PC-3 (cell line): ENCODE measurements at regions of chr2 and their contacts with region 1.

Region 1: GRCh38 chr2:173571021-173571882 is 216.6 kb downstream of the CDCA7 start:
- DNase-seq: peak; percentile 77
- ATAC-seq: peak; percentile 72
- H3K4me3 ChIP-seq: peak overlapping the region; percentile 58
- H3K27ac ChIP-seq: peak overlapping the region; percentile 71
- H3K4me1 ChIP-seq: peaks cover 40% of the 10 kb centered on the region
- H3K27me3 ChIP-seq: no peaks in the 10 kb centered on the region
- CTCF ChIP-seq: peak; percentile 70

Region 2: DNA sequence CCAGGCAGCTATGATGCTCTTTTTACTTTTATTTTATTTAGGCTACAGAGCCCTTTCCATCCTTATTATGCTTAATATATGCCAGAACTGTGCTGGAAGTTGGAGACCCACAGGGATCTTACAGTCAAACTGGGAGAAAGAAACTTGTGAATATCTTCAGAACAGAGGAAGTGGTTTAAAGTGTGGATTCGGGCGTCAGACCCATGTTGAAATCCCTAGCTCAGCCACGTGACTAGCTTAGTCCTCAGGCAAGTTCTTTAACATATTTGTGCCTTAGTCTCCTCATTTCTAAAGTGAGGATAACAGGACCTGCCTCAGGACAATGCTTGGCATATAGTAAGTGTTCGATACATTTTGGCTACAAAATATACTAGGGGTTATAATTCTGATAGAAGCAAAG is 436.5 kb before region 1 on chr2:
- CTCF ChIA-PET with region 1: no interaction called
- POLR2A ChIA-PET with region 1: no interaction called
- intact Hi-C with region 1: no loop called
- DNase-seq: no peak
- ATAC-seq: no peak
- H3K4me3 ChIP-seq: no peak overlapping the region
- H3K27ac ChIP-seq: no peak overlapping the region
- H3K4me1 ChIP-seq: no peaks in the 10 kb centered on the region
- H3K27me3 ChIP-seq: no peaks in the 10 kb centered on the region
- CTCF ChIP-seq: no peak

Region 3: GRCh38 chr2:173402405-173402974 is 168.8 kb before region 1 on chr2:
- CTCF ChIA-PET with region 1: interaction called, 5 read pairs
- POLR2A ChIA-PET with region 1: interaction called, 4 read pairs
- intact Hi-C with region 1: loop called (anchors 1 kb)
- DNase-seq: peak; percentile 92
- ATAC-seq: peak; percentile 93
- H3K4me3 ChIP-seq: peak overlapping the region; percentile 74
- H3K27ac ChIP-seq: no peak overlapping the region
- H3K4me1 ChIP-seq: peaks cover 16% of the 10 kb centered on the region
- H3K27me3 ChIP-seq: no peaks in the 10 kb centered on the region
- CTCF ChIP-seq: peak; percentile 93

Region 4: DNA sequence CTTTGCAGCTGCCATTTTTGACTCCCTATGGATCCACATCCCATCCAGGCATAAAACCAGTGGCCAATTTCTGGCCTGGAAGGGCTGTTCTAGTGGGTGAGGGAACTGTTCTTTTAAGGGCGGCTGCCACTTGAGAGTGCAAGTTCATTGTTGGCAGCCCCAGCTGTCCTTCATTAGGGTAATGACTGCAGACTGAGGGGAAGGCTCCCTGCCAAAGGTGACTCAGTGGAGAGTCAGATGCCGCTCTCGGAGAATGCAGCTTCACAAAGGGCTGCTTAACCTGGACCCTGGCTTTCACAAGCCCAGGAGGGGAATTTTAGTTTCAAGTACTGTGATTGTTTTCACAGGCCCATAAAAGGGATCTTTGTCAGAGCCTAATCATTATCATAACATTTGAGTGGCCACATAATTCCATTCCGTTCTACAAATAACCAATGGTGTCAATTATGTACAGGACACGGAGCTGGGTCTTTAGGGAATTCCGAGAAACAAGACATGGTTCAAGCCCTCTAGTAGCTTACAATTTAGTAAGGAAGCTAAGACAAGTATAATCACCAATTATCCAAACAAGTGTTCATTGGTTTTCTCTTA is 19.1 kb after region 1 on chr2:
- CTCF ChIA-PET with region 1: no interaction called
- POLR2A ChIA-PET with region 1: no interaction called
- intact Hi-C with region 1: loop called (anchors 2 kb)
- DNase-seq: peak; percentile 98
- ATAC-seq: peak; percentile 86
- H3K4me3 ChIP-seq: peak overlapping the region; percentile 59
- H3K27ac ChIP-seq: peak overlapping the region; percentile 98
- H3K4me1 ChIP-seq: peaks cover 36% of the 10 kb centered on the region
- H3K27me3 ChIP-seq: no peaks in the 10 kb centered on the region
- CTCF ChIP-seq: no peak

Region 5: DNA sequence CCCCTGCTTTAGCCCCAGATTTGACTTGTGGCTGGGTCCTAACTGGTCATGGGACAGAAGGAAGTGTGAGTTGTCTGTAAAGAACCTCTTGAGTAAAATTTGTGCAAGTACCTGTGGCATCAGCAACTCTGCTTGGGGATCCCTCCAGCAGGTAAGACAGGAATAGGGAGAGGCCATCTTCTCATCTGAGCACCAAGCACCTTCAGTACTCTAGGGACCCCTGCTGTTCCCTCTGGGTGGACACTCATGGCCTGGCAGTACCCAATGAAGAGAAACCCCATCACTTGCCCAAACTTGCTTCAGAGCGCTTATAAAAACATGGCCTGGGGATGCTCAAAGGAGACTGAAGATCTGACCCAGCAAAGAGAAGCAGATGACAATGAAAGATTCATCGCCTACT is 96.2 kb after region 1 on chr2:
- CTCF ChIA-PET with region 1: no interaction called
- POLR2A ChIA-PET with region 1: no interaction called
- intact Hi-C with region 1: loop called (anchors 5 kb)
- DNase-seq: peak; percentile 39
- ATAC-seq: peak; percentile 67
- H3K4me3 ChIP-seq: no peak overlapping the region
- H3K27ac ChIP-seq: no peak overlapping the region
- H3K4me1 ChIP-seq: peaks cover 13% of the 10 kb centered on the region
- H3K27me3 ChIP-seq: no peaks in the 10 kb centered on the region
- CTCF ChIP-seq: peak; percentile 57

Region 6: DNA sequence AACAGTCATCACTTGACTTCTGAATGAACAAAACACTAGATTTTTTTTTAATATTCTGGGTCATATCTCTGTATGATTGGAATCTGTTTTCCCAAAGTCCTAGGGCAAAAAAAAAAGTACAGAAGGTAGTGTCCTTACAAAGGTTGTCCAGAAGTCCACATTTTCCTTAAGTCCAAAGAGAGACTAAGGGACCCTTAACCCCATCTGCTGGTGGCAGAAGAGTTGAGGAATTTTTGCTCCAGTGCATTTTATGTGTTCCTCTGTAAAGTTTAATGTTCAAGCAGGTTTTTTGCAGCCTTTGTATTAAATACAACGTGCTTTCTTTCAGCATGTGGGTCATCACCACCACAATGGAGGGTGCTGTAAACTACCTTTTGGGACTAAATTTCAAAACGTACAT is 178.1 kb after region 1 on chr2:
- CTCF ChIA-PET with region 1: no interaction called
- POLR2A ChIA-PET with region 1: no interaction called
- intact Hi-C with region 1: loop called (anchors 1 kb)
- DNase-seq: peak; percentile 74
- ATAC-seq: peak; percentile 64
- H3K4me3 ChIP-seq: no peak overlapping the region
- H3K27ac ChIP-seq: no peak overlapping the region
- H3K4me1 ChIP-seq: no peaks in the 10 kb centered on the region
- H3K27me3 ChIP-seq: no peaks in the 10 kb centered on the region
- CTCF ChIP-seq: peak; percentile 74

Region 7: DNA sequence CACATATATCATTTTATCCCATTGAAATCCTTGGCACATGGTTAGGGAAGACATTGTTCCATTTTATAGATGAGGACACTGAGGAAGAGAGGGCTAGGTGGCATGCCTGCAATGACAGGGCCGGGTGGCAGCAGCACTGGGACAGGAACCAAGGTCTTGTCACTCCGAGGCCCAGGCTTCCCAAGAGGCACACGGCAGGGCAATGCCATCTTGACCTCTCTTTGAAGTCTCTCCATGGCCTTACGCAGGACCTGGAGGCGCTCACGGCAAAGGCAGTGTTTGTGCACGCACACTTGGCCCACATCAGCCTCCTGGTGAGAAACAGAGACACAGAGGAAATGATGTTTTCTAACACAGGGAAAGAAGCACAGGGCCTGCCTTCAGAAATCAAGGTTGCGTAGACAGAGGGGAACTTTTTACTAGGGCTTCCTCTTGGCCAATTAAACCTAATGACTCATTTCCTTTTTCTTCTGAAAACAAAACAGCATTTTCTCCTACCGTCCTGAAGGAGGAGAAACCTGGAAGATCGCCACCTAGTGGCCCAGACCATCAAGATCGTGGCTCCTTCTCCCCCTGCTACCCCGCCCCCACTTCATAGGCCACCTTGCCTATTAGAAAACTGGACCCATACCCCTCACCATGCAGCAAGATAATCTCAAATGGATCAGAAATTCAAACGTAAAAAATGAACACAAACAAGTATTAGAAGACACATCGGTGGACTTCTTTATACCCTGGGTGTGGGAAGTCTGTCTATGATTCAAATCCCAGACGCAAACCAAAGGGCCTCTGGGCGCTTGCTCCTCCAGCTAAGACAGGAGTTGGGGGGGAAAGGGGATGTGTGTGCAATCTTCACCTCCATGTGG is 468.5 kb after region 1 on chr2:
- CTCF ChIA-PET with region 1: no interaction called
- POLR2A ChIA-PET with region 1: no interaction called
- intact Hi-C with region 1: loop called (anchors 5 kb)
- DNase-seq: peak; percentile 97
- ATAC-seq: peak; percentile 85
- H3K4me3 ChIP-seq: peak overlapping the region; percentile 4; the same call in 1 of the 2 replicates
- H3K27ac ChIP-seq: peak overlapping the region; percentile 91
- H3K4me1 ChIP-seq: peaks cover 24% of the 10 kb centered on the region
- H3K27me3 ChIP-seq: no peaks in the 10 kb centered on the region
- CTCF ChIP-seq: peak; percentile 91

Region 8: GRCh38 chr2:174341286-174341994 is 770.2 kb after region 1 on chr2:
- CTCF ChIA-PET with region 1: no interaction called
- POLR2A ChIA-PET with region 1: no interaction called
- intact Hi-C with region 1: loop called (anchors 5 kb)
- DNase-seq: peak; percentile 93
- ATAC-seq: peak; percentile 68
- H3K4me3 ChIP-seq: peak overlapping the region; percentile 62
- H3K27ac ChIP-seq: peak overlapping the region; percentile 21
- H3K4me1 ChIP-seq: peaks cover 23% of the 10 kb centered on the region
- H3K27me3 ChIP-seq: no peaks in the 10 kb centered on the region
- CTCF ChIP-seq: peak; percentile 98